ENCODE measurements at regions of chr14 and their contacts with region 1.

Region 1: GRCh38 chr14:78022059-78022458 is 148.1 kb upstream of the NRXN3 start:
- DNase-seq: peak; percentile 86
- H3K4me3 ChIP-seq: no peak overlapping the region
- H3K27ac ChIP-seq: no peak overlapping the region
- H3K4me1 ChIP-seq: no peaks in the 10 kb centered on the region
- H3K27me3 ChIP-seq: no peaks in the 10 kb centered on the region
- CTCF ChIP-seq: peak; percentile 81

Region 2: GRCh38 chr14:77903221-77903620 is 118.8 kb before region 1 on chr14:
- CTCF ChIA-PET with region 1: no interaction called
- POLR2A ChIA-PET with region 1: no interaction called
- intact Hi-C with region 1: no loop called
- DNase-seq: peak; percentile 59
- H3K4me3 ChIP-seq: no peak overlapping the region
- H3K27ac ChIP-seq: no peak overlapping the region
- H3K4me1 ChIP-seq: peaks cover 14% of the 10 kb centered on the region
- H3K27me3 ChIP-seq: no peaks in the 10 kb centered on the region
- CTCF ChIP-seq: no peak

Region 3: DNA sequence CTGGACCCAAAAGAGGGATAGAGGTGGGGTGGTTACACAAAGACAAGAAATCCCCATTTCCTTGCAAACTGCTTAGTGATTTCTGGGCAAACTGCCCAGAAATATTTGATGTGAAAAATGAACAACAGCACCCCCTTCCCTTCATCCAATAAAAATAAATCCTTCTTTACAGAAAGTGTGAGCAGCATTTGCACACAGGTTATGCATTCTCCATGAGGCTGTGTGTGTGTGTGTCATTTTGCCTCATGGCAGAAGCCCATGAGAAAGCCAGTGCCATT is 130.9 kb after region 1 on chr14:
- CTCF ChIA-PET with region 1: no interaction called
- POLR2A ChIA-PET with region 1: no interaction called
- intact Hi-C with region 1: loop called (anchors 5 kb)
- DNase-seq: peak; percentile 59
- H3K4me3 ChIP-seq: no peak overlapping the region
- H3K27ac ChIP-seq: no peak overlapping the region
- H3K4me1 ChIP-seq: peaks cover 9% of the 10 kb centered on the region
- H3K27me3 ChIP-seq: peaks cover 5% of the 10 kb centered on the region
- CTCF ChIP-seq: peak; percentile 34; the same call in 1 of the 2 replicates

Region 4: DNA sequence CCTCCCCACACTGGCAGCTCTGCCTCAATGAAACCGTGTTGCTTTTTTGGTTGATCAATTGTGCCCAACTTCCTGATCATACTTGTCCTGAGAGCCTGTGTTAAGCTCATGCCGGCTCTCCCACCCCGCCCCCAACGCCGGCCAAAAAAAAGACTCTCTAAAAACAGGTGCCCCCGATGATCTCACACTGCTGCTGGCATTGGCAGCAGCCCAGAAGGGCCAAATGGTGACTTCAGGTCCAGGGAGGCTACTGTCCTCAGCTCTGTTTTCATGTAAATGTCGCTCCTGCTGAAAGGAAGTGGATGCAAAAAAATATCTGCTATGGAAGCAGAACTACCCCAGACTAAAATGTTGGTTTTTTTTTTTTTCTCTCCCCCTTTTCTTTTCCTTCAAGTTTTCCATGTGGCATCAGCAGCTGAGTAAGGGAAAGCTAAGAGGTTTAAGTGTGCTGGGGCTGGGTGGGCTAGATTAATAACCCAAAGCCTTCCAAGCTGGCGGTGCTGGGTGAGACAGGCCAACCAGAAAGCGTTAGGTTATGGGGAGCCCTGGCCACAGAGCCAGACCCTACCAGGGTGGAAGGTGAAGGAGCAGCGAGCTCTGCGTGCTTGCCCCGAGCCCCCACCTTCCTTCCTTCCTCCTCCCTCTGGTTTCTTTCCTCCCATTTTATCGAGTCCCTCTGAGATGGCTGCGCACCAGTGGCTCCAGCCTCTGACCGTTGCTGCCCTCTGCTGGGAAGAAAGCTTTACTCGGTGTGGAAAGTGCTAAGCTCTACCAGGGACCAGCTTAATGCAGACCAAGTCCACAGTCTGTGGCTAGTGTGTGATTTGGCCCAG is 544.2 kb after region 1 on chr14:
- CTCF ChIA-PET with region 1: interaction called, 10 read pairs
- POLR2A ChIA-PET with region 1: no interaction called
- intact Hi-C with region 1: loop called (anchors 1 kb)
- DNase-seq: peak; percentile 79
- H3K4me3 ChIP-seq: no peak overlapping the region
- H3K27ac ChIP-seq: no peak overlapping the region
- H3K4me1 ChIP-seq: no peaks in the 10 kb centered on the region
- H3K27me3 ChIP-seq: peaks cover 2% of the 10 kb centered on the region
- CTCF ChIP-seq: peak; percentile 85

Region 5: GRCh38 chr14:78598041-78598920 is 576.2 kb after region 1 on chr14:
- CTCF ChIA-PET with region 1: interaction called, 5 read pairs
- POLR2A ChIA-PET with region 1: no interaction called
- intact Hi-C with region 1: loop called (anchors 5 kb)
- DNase-seq: peak; percentile 69
- H3K4me3 ChIP-seq: no peak overlapping the region
- H3K27ac ChIP-seq: no peak overlapping the region
- H3K4me1 ChIP-seq: no peaks in the 10 kb centered on the region
- H3K27me3 ChIP-seq: peaks cover 14% of the 10 kb centered on the region
- CTCF ChIP-seq: peak; percentile 96

Measured in A673 (cell line).